Prostate gland (tissue), 2 donors: ENCODE measurements at regions of chr9 and their contacts with region 1.

Region 1: GRCh38 chr9:84681516-84682285 is 12.2 kb downstream of the NTRK2 start:
- DNase-seq: no peak
- H3K4me3 ChIP-seq: no peak overlapping the region
- H3K27ac ChIP-seq: no peak overlapping the region
- H3K4me1 ChIP-seq: no peaks in the 10 kb centered on the region
- H3K27me3 ChIP-seq: no peaks in the 10 kb centered on the region
- CTCF ChIP-seq: no peak
- POLR2A ChIP-seq: no peak

Region 2: GRCh38 chr9:84781458-84781857 is 99.8 kb after region 1 on chr9:
- intact Hi-C with region 1: loop called (anchors 10 kb)
- DNase-seq: no peak
- H3K4me3 ChIP-seq: no peak overlapping the region
- H3K27ac ChIP-seq: no peak overlapping the region
- H3K4me1 ChIP-seq: no peaks in the 10 kb centered on the region
- H3K27me3 ChIP-seq: no peaks in the 10 kb centered on the region
- CTCF ChIP-seq: peak; percentile 18 to 45 (median 36)
- POLR2A ChIP-seq: no peak